Heart left ventricle (tissue), 16 donors: ENCODE measurements at regions of chr1 and their contacts with region 1.

Region 1: DNA sequence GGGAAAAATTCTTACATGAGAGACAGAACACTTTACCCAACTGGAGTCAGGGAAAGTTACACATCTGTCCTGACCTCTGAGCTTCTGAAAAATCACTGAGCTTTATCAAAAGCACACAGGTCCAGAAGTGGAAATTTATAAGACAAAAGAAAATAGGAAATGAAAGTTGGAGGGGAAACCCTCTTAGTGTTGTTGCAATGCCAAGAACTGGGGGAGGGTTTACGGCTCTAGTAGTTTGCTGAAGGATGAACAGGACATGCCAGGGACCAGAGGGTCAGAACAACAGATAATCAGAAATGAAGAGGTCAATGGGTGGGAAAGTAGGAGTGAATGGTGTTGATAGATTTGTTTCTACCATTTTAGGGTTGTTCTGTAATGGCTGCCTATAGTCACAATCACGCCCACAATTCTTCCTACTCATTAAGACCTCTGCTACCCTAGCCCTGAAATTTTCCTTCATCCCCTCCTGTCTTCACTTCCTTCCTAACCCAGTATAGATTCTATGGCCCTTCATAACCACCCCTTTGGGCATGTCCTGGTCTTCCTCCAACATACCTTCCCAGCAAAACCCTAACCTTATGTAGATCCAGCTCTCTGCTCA is 30.3 kb upstream of the FMOD start:
- DNase-seq: no peak
- ATAC-seq: peak in 3 of 4 donors; percentile 18 to 42 (median 34)
- H3K4me3 ChIP-seq: no peak overlapping the region
- H3K27ac ChIP-seq: peak overlapping the region in 4 of 12 donors; percentile 4 to 69 (median 30)
- H3K4me1 ChIP-seq: peaks cover 0 to 43% (median 35%) of the 10 kb centered on the region in 12 donors
- H3K27me3 ChIP-seq: no peaks in the 10 kb centered on the region
- CTCF ChIP-seq: no peak
- POLR2A ChIP-seq: no peak

Region 2: GRCh38 chr1:203428981-203429599 is 47.8 kb after region 1 on chr1:
- intact Hi-C with region 1: loop called in 1 of 10 experiments (anchors 5 kb)
- DNase-seq: no peak
- ATAC-seq: no peak
- H3K4me3 ChIP-seq: no peak overlapping the region
- H3K27ac ChIP-seq: no peak overlapping the region
- H3K4me1 ChIP-seq: peaks cover 0 to 18% (median 0%) of the 10 kb centered on the region in 12 donors
- H3K27me3 ChIP-seq: peaks cover 0 to 5% (median 0%) of the 10 kb centered on the region in 9 donors
- CTCF ChIP-seq: no peak
- POLR2A ChIP-seq: no peak